Activated CD4-positive, alpha-beta T cell treated with anti-CD3 and anti-CD28 coated beads for 36 hours (primary cell): ENCODE measurements at regions of chr9 and their contacts with region 1.

Region 1: DNA sequence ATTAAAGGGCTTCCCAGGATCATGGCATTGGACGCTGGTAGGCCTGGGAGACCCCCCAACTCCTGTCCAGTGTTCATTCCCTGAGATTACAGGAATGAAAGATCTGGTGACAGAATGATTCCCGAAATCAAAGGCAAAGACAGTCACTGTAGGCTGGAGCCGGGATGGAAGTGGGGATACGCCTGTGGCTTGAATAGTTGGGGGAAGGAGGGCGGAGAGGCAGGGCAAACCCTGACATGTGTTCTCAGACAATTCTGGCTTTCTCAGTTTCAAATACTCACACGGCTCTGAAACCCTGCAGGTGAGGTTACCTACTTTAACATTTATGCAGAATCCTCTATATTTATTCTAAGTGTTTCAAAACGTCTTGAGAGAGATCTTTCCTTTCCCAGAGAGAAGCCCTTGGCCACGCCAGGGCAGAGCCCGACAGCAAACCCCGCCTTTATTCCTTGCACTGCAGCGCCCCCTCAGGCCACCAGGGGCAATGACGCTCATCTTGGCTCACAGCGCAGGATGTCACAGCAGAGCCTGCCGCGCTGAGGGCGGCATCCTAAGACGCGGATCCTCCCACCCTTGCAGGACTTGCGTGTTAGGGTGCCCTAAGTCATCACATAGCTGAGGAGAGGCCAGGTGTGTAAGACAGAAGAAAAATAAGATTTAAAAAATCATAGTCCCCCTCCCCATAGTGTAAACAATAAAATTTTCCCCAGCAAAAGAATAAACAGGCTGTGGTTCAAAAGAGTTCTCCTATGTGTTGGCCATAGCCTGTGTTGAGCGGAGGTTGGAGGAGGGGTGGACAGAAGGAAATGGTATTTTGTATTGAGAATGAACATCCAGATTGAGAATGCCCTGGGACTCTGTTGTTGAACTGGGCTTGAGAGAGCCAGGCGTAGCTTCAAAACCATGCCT is 284.5 kb downstream of the NTRK2 start:
- DNase-seq: peak; percentile 81
- ATAC-seq: peak; percentile 96
- H3K4me3 Mint-ChIP-seq: no peak overlapping the region
- H3K27ac Mint-ChIP-seq: no peak overlapping the region
- H3K4me1 Mint-ChIP-seq: no peaks in the 10 kb centered on the region
- H3K27me3 Mint-ChIP-seq: peaks cover 15% of the 10 kb centered on the region

Region 2: GRCh38 chr9:84404095-84404686 is 549.9 kb before region 1 on chr9:
- CTCF ChIA-PET with region 1: no interaction called
- POLR2A ChIA-PET with region 1: no interaction called
- intact Hi-C with region 1: loop called in 1 of 2 experiments (anchors 2 kb)
- DNase-seq: peak; percentile 39
- ATAC-seq: no peak
- H3K4me3 Mint-ChIP-seq: no peak overlapping the region
- H3K27ac Mint-ChIP-seq: no peak overlapping the region
- H3K4me1 Mint-ChIP-seq: no peaks in the 10 kb centered on the region
- H3K27me3 Mint-ChIP-seq: no peaks in the 10 kb centered on the region

Region 3: DNA sequence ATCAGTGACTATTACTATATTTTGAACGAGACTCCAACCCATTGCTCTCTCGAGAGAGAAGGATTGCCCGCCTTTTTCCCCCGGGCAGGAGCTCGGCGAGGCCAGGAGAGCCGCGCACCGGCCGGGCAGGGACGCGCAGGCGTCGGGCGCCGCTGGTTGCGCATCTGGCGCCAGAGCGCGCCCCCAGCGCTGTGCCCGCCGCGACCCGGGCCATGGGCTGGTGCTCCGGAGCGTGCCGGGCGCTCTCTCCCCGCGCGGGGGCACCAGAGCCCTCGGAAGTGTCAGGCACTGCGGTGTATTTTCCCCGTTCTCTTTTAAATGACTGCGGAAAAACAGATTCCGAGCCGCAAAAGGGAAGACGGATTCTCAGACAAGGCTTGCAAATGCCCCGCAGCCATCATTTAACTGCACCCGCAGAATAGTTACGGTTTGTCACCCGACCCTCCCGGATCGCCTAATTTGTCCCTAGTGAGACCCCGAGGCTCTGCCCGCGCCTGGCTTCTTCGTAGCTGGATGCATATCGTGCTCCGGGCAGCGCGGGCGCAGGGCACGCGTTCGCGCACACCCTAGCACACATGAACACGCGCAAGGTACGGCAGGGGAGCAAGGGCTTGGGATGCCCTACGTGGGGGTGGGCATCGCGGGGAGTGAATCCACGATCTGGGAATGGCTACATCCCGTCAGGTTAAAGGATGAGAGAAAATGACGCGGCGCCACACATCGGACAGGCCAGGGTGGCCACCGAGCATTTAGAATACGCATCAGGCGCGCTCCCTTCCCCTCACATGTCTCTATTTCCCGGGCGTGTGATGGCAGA is 285.6 kb before region 1 on chr9:
- CTCF ChIA-PET with region 1: no interaction called
- POLR2A ChIA-PET with region 1: no interaction called
- intact Hi-C with region 1: loop called in 1 of 2 experiments (anchors 10 kb)
- DNase-seq: peak; percentile 81
- ATAC-seq: peak; percentile 91
- H3K4me3 Mint-ChIP-seq: peak overlapping the region; percentile 57
- H3K27ac Mint-ChIP-seq: no peak overlapping the region
- H3K4me1 Mint-ChIP-seq: peaks cover 15% of the 10 kb centered on the region
- H3K27me3 Mint-ChIP-seq: peaks cover 51% of the 10 kb centered on the region

Region 4: DNA sequence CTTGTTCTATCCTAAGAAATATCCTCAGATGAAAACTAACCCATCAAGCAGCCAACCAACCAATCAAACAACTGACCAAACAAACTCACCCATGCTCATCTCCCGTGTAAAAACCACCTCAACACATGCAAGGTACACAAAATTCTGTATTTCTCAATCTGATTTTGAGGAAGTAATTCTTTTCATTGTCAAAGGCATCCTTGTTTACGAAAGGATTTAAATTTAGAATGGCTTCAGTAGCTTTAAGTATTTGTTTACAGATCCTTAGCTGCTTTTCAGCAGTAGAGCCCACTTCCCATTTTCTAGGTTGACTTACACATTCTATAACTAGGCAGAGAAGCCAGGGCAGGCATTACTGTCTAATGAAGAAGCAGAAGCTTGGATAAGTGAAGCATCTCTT is 205.9 kb before region 1 on chr9:
- CTCF ChIA-PET with region 1: no interaction called
- POLR2A ChIA-PET with region 1: no interaction called
- intact Hi-C with region 1: no loop called
- DNase-seq: no peak
- ATAC-seq: no peak
- H3K4me3 Mint-ChIP-seq: no peak overlapping the region
- H3K27ac Mint-ChIP-seq: no peak overlapping the region
- H3K4me1 Mint-ChIP-seq: peaks cover 11% of the 10 kb centered on the region
- H3K27me3 Mint-ChIP-seq: peaks cover 4% of the 10 kb centered on the region

Region 5: GRCh38 chr9:84928419-84928818 is 25.6 kb before region 1 on chr9:
- CTCF ChIA-PET with region 1: no interaction called
- POLR2A ChIA-PET with region 1: no interaction called
- intact Hi-C with region 1: no loop called
- DNase-seq: no peak
- ATAC-seq: no peak
- H3K4me3 Mint-ChIP-seq: no peak overlapping the region
- H3K27ac Mint-ChIP-seq: no peak overlapping the region
- H3K4me1 Mint-ChIP-seq: no peaks in the 10 kb centered on the region
- H3K27me3 Mint-ChIP-seq: peaks cover 10% of the 10 kb centered on the region

Region 6: DNA sequence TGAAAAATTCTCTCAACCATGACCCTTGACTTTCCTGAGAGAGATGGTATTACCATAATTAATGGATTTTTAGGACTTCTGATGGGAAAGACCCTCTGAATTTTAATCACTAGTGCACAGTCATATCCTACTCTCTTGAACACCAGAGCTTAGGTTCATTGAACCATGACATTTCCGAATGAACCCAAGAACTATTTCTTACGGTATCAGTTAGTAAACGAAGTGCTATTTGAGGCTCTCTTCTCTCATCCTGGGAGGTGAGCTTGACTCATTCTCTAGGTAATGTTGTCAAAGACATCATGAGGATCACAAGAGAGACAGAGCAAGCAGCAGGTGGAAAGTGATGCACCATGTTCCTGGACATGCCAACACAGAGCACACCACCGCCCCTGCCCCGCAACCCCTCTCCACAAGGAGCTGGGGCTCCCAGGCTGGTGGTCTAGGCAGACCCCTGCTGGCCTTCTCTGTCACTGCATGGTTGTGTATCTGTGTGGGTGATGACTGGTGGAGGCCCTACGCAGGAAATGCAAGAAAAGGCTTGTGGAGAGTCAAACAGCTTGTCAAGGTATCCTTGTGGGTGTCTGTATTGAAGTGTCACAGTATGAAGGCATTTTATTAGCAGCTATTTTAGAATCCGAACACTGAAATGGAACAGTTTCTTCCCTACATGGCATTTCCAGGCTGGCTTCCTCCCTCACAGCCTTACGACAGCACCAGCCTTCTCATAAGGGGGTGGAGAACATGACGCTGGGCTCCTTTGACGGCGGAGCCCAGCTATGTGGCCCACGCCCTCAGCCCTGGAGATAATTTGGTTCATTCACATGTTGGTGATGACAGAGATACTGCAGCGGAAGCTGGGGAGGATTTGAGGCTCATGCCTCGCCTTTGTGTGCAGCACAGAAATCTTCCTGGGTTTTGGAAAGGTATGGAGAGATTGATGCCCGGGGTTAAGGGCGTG is 13.1 kb after region 1 on chr9:
- CTCF ChIA-PET with region 1: no interaction called
- POLR2A ChIA-PET with region 1: no interaction called
- intact Hi-C with region 1: no loop called
- DNase-seq: no peak
- ATAC-seq: no peak
- H3K4me3 Mint-ChIP-seq: no peak overlapping the region
- H3K27ac Mint-ChIP-seq: no peak overlapping the region
- H3K4me1 Mint-ChIP-seq: no peaks in the 10 kb centered on the region
- H3K27me3 Mint-ChIP-seq: peaks cover 8% of the 10 kb centered on the region